Heart left ventricle (tissue), 16 donors: ENCODE measurements at regions of chr6 and their contacts with region 1.

Region 1: DNA sequence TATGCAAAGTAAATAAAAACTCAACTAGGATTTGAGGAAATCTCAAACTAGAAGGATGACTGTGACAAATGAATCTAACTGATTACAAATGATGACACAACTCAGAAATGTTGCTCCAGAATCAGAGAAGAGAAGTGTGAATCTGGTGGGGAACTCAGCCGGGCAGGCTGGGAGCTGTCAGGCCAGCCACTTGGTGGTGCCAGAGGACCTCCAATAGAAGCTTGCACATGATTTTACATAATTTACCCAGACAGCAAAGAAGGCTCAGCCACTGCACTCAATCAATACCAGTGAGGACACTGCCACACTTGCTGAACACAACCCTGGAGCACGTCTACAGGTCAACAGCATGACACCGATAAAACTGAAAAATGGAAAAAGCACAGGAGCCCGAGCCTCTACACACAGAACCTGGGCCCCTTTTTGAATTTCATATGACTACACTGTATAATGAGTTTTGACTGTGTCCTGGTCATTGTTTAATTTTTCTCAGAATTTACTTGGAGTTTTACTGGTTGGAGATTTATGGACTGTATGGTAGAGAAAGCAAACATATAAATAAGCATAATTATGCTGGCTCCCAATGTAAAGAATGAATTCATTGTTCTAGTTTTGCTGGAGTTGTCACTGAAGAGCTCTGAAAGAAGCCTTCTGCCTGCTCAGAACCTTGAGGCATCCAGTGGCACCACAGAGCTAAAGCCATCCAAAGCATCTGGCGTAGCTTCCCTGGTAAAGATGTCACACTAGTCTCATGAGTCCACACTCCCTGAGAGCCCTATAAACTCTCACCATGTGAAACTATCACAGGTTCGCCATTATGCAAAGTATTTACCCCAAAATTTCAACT is 296.5 kb downstream of the THBS2 start:
- DNase-seq: peak in 4 of 5 donors; percentile 49 to 64 (median 51)
- ATAC-seq: peak; percentile 86 to 94 (median 92)
- H3K4me3 ChIP-seq: no peak overlapping the region
- H3K27ac ChIP-seq: no peak overlapping the region
- H3K4me1 ChIP-seq: peaks cover 0 to 12% (median 0%) of the 10 kb centered on the region in 12 donors
- H3K27me3 ChIP-seq: peaks cover 0 to 18% (median 0%) of the 10 kb centered on the region in 9 donors
- CTCF ChIP-seq: peak; percentile 56 to 90 (median 76)
- POLR2A ChIP-seq: no peak

Region 2: DNA sequence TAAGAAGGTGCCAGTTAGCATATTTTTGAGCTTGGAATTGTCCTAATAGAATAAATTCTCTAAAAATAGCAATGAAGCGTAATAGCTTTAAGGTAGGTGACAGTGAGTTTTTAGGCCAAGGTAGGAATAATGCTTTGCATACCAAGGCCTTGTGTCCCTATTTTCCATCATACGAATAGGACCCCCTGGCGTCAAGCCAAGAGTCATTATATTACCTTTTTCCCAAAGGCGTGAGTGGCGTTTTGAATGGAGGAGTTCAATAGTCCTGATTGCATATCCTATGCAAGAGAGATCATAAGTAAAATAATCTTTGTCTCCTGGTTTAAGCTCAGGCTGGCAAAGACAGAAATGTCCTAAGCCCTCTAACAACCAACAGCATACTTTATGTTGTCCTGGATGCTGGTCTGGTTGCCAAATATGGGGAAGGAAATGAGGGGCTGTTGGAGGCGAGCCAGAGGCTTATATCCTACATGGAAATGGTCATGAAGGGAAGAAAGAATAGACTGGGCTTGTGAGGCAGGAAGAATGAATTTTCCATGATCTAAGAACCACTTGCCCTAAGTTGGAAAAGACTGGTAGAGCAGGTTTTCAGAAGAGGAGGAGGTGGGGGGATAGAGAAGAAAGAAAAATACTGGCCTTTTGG is 279.2 kb before region 1 on chr6:
- intact Hi-C with region 1: no loop called
- DNase-seq: no peak
- ATAC-seq: no peak
- H3K4me3 ChIP-seq: no peak overlapping the region
- H3K27ac ChIP-seq: no peak overlapping the region
- H3K4me1 ChIP-seq: no peaks in the 10 kb centered on the region
- H3K27me3 ChIP-seq: no peaks in the 10 kb centered on the region
- CTCF ChIP-seq: no peak
- POLR2A ChIP-seq: no peak

Region 3: GRCh38 chr6:169513478-169514193 is 556.5 kb after region 1 on chr6:
- intact Hi-C with region 1: loop called in 3 of 10 experiments (anchors 2 to 10 kb)
- DNase-seq: no peak
- ATAC-seq: no peak
- H3K4me3 ChIP-seq: no peak overlapping the region
- H3K27ac ChIP-seq: no peak overlapping the region
- H3K4me1 ChIP-seq: no peaks in the 10 kb centered on the region
- H3K27me3 ChIP-seq: no peaks in the 10 kb centered on the region
- CTCF ChIP-seq: no peak
- POLR2A ChIP-seq: no peak

Region 4: DNA sequence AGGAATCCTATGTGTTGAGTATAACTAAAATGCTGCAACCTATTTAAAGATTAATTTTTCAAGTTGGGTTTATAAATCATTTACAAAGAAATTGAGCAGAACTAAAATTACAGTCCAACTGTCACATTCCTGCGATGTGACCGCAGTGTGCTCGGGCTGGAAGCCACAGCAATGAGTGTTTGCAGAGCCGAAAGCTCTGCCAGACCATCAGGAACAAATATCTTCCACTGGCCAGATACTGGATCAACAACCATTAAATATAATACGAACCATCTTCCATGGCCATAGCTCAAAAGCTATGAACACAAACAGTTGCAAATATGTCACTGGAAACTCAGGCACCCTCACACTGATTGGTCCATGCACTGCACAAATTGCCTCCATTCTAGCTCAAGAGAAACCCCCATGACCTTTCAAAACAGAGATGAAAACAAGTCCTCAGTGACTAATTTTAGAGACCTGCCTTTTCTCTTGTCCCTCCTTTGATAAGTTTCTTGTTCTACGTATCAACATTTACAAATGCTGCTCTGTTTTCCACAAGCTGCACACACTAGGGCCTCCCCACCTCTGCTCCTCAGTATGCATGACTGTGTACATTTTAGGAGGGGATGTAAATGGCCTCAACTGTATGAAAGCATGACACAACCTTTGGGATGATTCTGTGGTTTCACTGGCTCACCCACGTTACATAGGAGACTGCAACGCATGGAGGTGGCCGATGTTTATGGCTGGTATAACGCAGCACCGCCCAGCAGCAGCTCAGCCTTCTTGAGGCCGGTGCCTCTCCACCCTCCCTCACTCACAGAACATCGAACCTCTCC is 573.0 kb after region 1 on chr6:
- intact Hi-C with region 1: loop called in 1 of 10 experiments (anchors 10 kb)
- DNase-seq: peak in 1 of 5 donors; percentile 21
- ATAC-seq: peak; percentile 41 to 71 (median 50)
- H3K4me3 ChIP-seq: no peak overlapping the region
- H3K27ac ChIP-seq: peak overlapping the region in 2 of 12 donors; percentile 2 to 43
- H3K4me1 ChIP-seq: peaks cover 0 to 4% (median 0%) of the 10 kb centered on the region in 12 donors
- H3K27me3 ChIP-seq: no peaks in the 10 kb centered on the region
- CTCF ChIP-seq: no peak
- POLR2A ChIP-seq: no peak

Region 5: DNA sequence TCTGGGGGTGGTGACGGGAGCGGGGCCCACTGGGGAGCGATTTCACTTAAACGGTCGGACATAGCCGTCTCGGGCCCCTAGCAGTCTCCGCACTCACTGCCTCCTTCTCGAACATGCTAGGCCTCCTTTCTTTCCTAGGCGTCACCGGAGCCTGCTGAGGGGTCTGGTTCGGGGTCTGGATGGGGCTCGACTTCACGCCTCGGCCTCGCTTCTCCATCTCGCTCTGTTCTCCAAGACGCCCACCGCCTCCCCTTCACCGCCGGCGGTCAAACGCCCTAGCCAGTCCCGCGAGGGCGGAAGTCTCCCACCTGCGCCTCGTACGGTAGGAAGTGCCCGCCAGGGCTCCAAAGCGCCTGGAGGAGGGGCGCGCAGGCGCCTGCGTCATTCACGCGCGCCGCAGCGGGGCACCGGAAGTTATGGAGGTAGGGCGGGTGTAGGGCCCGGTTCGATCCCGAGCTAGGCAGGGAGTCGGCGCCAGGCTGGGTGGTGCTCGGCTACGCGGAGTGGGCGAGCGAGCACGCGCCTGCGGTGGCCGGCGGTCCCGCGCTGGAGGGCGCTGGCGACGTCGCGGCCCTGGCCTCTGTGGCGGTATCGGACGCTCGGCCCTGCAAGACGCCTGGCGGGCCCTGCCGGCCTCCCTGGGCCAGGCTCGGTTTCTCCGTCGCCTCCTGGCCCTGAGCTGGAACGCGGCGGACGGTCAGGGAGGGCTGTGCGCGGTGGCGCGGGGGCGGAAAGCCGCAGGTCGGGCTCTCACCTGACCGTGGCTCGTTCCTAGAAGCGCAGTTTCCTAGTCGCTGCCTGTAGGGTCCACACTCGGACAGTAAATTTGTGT is 794.4 kb after region 1 on chr6 and contains the starts of genes DYNLT2 and ERMARD:
- intact Hi-C with region 1: loop called in 1 of 10 experiments (anchors 10 kb)
- DNase-seq: peak; percentile 92 to 96 (median 94)
- ATAC-seq: peak; percentile 97 to 100 (median 99)
- H3K4me3 ChIP-seq: peak within 1 kb of the TSS; percentile 66 to 98 (median 88)
- H3K27ac ChIP-seq: peak within 1 kb of the TSS; percentile 85 to 97 (median 96)
- H3K4me1 ChIP-seq: peaks cover 0 to 29% (median 17%) of the 10 kb centered on the region in 12 donors
- H3K27me3 ChIP-seq: no peaks in the 10 kb centered on the region
- CTCF ChIP-seq: peak in 10 of 12 donors; percentile 14 to 37 (median 24)
- POLR2A ChIP-seq: peak in 1 of 2 donors; percentile 81
- total RNA-seq, gene DYNLT2: 0.49 to 1.2 (median 0.62) TPM
- total RNA-seq, gene ERMARD: 6.4 to 15.5 (median 8.8) TPM